ENCODE measurements at regions of chr9 and their contacts with region 1.

Region 1: DNA sequence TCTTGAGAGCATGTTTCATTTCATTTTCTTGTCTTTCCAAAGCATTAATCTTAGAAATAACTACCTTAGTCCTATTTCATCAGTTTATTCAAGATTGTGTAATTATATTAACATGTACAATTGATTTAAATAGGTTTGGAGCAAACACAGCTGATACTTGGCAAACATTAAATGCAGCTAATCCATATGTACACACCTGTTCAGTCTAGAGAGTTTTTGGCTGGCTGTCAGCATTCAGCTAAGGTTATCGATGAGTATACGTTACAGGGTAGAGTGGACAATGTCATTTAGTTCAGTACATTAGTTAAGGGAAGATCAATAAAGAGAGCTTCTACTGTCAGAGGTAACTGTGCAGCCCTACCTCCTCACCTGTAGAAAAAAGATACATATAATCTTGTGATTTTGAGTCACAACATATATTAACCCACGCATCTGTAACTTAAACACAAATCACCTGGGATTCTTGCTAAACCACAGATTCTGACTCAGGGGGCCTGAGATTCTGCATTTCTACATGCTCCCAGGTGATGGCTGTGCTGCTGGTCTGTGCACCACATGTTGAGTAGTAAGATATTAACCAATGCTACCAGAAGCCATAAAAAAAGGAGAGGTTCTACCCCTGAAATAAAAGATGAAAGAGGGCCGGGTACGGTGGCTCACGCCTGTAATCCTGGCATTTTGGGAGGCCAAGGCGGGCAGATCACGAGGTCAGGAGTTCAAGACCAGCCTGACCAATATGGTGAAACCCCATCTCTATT is 34.1 kb upstream of the PCA3 start:
- DNase-seq: no peak
- H3K4me3 ChIP-seq: no peak overlapping the region
- H3K27ac ChIP-seq: no peak overlapping the region
- H3K4me1 ChIP-seq: no peaks in the 10 kb centered on the region
- CTCF ChIP-seq: no peak

Region 2: DNA sequence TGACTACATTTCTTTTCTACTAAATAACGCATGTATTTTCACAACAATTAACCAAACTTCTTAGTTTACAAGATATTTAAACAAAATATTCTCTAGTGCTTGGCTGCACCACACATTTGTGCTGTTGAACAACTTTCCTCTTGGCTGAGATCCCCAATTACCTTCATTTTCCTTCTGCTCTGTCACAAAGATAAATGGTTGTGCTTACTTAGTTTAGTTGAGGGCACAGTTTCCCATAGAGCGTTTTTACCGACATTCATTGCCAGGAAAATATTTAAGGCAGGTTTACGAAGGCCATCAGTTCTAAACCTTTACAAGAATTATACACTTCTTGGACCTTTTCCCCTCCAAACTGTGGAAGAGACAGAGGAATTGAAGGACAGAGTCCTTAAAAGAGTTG is 115.1 kb after region 1 on chr9:
- CTCF ChIA-PET with region 1: no interaction called
- POLR2A ChIA-PET with region 1: interaction called, 10 read pairs
- intact Hi-C with region 1: no loop called
- DNase-seq: no peak
- H3K4me3 ChIP-seq: no peak overlapping the region
- H3K27ac ChIP-seq: no peak overlapping the region
- H3K4me1 ChIP-seq: no peaks in the 10 kb centered on the region
- CTCF ChIP-seq: no peak

Region 3: DNA sequence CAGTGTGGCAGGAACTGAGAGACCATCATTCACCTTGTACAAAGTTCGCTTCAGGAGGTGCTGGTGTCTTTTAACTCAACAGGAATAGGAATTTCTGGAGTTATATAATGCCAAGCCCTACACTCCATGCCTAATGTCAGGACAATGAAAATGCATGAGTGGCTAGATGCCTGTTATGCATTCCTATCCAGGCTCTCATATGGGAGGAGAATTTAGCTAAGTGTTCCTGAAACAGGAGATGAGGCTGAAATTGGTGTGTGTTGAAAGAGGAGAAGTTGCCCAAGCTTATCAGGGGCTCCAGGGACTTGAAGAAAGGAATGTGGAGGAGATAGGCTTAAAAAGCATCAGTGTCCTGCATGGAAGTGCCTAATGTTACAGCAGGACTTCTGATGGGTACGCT is 202.6 kb after region 1 on chr9:
- CTCF ChIA-PET with region 1: no interaction called
- POLR2A ChIA-PET with region 1: no interaction called
- intact Hi-C with region 1: no loop called
- DNase-seq: no peak
- H3K4me3 ChIP-seq: no peak overlapping the region
- H3K27ac ChIP-seq: no peak overlapping the region
- H3K4me1 ChIP-seq: no peaks in the 10 kb centered on the region
- CTCF ChIP-seq: no peak